T-cell (primary cell): ENCODE measurements at regions of chr6 and their contacts with region 1.

Region 1: DNA sequence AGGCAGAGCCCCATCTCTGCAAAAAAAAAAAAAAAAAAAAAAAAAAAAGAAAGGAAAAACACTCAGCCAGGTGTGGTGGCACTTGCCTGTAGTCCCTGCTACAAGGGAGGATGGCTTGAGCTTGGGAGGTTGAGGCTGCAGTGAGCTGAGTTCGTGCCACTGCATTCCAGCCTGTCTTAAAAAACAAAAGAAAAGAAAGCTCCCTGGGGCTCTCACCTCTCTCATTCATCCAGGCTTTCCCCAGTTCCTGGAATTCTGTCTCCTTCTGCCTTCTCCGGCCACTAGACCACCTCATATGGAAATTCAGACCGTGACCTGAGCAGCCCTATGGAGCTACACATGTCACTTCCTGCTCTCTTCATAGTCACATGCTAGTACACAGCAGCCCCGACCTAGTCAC is 101.1 kb upstream of the TAB2 start:
- DNase-seq: no peak
- ATAC-seq: peak in 1 of 4 experiments; percentile 39
- H3K4me3 ChIP-seq: no peak overlapping the region
- H3K4me3 Mint-ChIP-seq: no peak overlapping the region
- H3K27ac ChIP-seq: no peak overlapping the region
- H3K27ac Mint-ChIP-seq: peak overlapping the region in 1 of 2 donors; percentile 71
- H3K4me1 ChIP-seq: peaks cover 0 to 21% of the 10 kb centered on the region in 2 experiments
- H3K4me1 Mint-ChIP-seq: peaks cover 20 to 30% (median 21%) of the 10 kb centered on the region in 3 donors
- H3K27me3 ChIP-seq: no peaks in the 10 kb centered on the region
- H3K27me3 Mint-ChIP-seq: no peaks in the 10 kb centered on the region

Region 2: GRCh38 chr6:149190224-149190831 is 26.1 kb before region 1 on chr6:
- CTCF ChIA-PET with region 1: no interaction called
- POLR2A ChIA-PET with region 1: interaction called in 1 of 2 experiments, 12 read pairs
- DNase-seq: peak in 34 of 35 experiments; percentile 6 to 58 (median 36)
- ATAC-seq: peak in 2 of 4 experiments; percentile 54 to 62
- H3K4me3 ChIP-seq: no peak overlapping the region
- H3K4me3 Mint-ChIP-seq: no peak overlapping the region
- H3K27ac ChIP-seq: no peak overlapping the region
- H3K27ac Mint-ChIP-seq: peak overlapping the region; percentile 28 to 62
- H3K4me1 ChIP-seq: peaks cover 0 to 10% of the 10 kb centered on the region in 2 experiments
- H3K4me1 Mint-ChIP-seq: peaks cover 17 to 35% (median 22%) of the 10 kb centered on the region in 3 donors
- H3K27me3 ChIP-seq: no peaks in the 10 kb centered on the region
- H3K27me3 Mint-ChIP-seq: no peaks in the 10 kb centered on the region

Region 3: GRCh38 chr6:149236589-149236988 is 20.1 kb after region 1 on chr6:
- CTCF ChIA-PET with region 1: interaction called in 1 of 2 experiments, 4 read pairs
- POLR2A ChIA-PET with region 1: interaction called in 1 of 2 experiments, 11 read pairs
- DNase-seq: no peak
- ATAC-seq: no peak
- H3K4me3 ChIP-seq: no peak overlapping the region
- H3K4me3 Mint-ChIP-seq: no peak overlapping the region
- H3K27ac ChIP-seq: no peak overlapping the region
- H3K27ac Mint-ChIP-seq: no peak overlapping the region
- H3K4me1 ChIP-seq: peaks cover 30 to 32% of the 10 kb centered on the region in 2 experiments
- H3K4me1 Mint-ChIP-seq: peaks cover 41 to 54% (median 43%) of the 10 kb centered on the region in 3 donors
- H3K27me3 ChIP-seq: no peaks in the 10 kb centered on the region
- H3K27me3 Mint-ChIP-seq: no peaks in the 10 kb centered on the region